ENCODE measurements at regions of chr12 and their contacts with region 1.

Region 1: GRCh38 chr12:91639327-91639726 is 456.7 kb upstream of the DCN start:
- DNase-seq: no peak
- H3K4me3 ChIP-seq: no peak overlapping the region
- H3K27ac ChIP-seq: no peak overlapping the region
- H3K4me1 ChIP-seq: no peaks in the 10 kb centered on the region
- H3K27me3 ChIP-seq: no peaks in the 10 kb centered on the region
- CTCF ChIP-seq: no peak

Region 2: GRCh38 chr12:91628366-91629055 is 10.8 kb before region 1 on chr12:
- CTCF ChIA-PET with region 1: interaction called, 12 read pairs
- dilution Hi-C with region 1: no loop called
- in situ Hi-C with region 1: no loop called
- intact Hi-C with region 1: no loop called
- DNase-seq: peak; percentile 16
- H3K4me3 ChIP-seq: no peak overlapping the region
- H3K27ac ChIP-seq: no peak overlapping the region
- H3K4me1 ChIP-seq: no peaks in the 10 kb centered on the region
- H3K27me3 ChIP-seq: no peaks in the 10 kb centered on the region
- CTCF ChIP-seq: no peak